GM12878 (cell line): ENCODE measurements at regions of chr2 and their contacts with region 1.

Region 1: DNA sequence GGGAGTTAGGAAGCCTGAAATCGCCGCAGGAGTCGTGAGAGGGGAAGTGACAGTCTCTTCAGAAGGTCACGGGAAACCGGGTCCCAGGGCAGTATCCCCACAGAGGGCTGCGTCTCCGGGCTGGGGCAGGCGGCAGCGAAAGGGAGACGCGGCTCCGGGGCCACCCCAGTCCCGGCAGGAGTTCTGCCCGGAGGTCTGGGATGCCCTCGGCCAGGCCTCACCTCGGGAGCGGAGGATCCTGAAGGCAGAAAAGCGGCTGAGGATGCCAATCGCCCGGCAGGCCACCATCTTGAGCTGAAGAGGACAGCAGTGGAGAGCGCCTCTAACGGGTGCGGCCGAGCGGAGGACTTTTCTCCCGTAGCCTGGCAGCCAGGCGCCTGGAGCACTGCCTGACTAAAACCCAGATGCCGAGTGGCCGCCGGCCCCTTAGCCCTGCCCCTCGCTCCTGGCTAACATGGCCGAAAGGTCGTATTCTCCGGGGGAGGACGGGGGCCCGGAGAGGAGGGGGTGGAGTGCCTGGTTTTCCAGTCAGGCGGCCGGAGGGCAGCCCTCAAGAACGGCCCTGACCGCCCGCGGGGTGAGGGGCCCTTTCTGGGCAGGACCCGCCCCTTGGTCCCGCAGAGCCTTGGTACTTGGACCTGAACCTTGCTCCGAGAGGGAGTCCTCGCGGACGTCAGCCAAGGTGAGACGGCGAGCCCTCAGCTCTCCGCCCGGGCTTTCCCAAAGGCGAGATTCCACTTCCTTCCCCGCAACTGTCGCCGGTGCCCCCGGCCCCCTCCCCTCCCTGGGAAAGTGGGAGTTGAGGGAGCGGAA is at the starts of genes HADHA and HADHB:
- DNase-seq: peak; percentile 56
- ATAC-seq: peak; percentile 82
- H3K4me3 ChIP-seq: peak within 1 kb of the TSS; percentile 92
- H3K27ac ChIP-seq: peak within 1 kb of the TSS; percentile 96
- H3K4me1 ChIP-seq: peaks cover 16% of the 10 kb centered on the region
- H3K27me3 ChIP-seq: no peaks in the 10 kb centered on the region
- CTCF ChIP-seq: peak; percentile 20 to 36 (median 23); a peak in 4 of 6 replicates
- EP300 ChIP-seq: no peak
- POLR2A ChIP-seq: peak; percentile 89
- RAD21 ChIP-seq: no peak
- polyA plus RNA-seq, gene HADHA: 109 to 144 TPM
- polyA plus RNA-seq, gene HADHB: 107 to 145 TPM

Region 2: DNA sequence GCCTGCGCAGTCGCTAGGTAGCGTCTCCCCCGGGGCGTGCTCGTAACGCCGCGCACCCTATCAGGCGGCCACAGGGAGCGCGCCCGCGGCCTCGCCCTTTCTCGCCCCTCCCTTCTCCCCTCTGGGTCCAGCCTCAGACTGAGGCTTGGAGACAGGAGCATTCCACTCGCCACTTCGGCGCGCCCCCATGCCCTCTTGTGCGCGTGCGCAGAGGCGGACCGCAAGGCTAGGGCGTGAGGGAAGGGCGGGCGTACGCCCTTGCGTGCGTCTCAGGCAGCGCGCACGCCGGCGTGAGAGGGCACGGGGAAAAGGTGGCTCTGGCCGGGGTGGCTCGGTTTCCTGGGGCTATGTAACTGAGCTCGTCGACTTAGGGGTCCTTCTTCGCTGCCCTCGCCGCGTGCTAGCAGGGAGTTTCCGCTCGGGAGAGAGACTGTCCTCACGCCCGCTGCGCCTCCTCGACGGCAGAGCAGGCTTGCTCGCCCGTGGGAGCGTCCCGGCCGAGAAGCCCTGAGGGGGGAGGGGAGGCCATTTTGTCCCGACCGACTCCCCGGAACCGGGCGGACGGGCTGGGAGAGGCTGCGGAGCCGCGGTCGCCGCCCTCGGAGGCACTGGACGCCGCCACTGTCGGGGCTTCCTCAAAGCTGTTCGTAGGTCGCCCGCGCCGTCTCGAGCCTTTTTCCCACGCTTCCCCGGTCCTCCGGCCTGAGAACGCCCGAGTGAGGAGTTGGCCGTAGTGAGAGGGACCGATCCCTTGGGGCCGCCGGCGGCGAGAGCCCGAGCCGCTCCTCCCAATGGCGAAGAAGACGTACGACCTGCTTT is 210.5 kb before region 1 on chr2 and contains the start of gene RAB10:
- CTCF ChIA-PET with region 1: no interaction called
- POLR2A ChIA-PET with region 1: interaction called, 11 read pairs
- RAD21 ChIA-PET with region 1: no interaction called
- SMC1A ChIA-PET with region 1: no interaction called
- in situ Hi-C with region 1: no loop called
- intact Hi-C with region 1: no loop called
- DNase-seq: peak; percentile 98
- ATAC-seq: peak; percentile 89
- H3K4me3 ChIP-seq: peak within 1 kb of the TSS; percentile 98
- H3K27ac ChIP-seq: peak within 1 kb of the TSS; percentile 95
- H3K4me1 ChIP-seq: peaks cover 3% of the 10 kb centered on the region; the same call in 1 of the 2 replicates
- H3K27me3 ChIP-seq: no peaks in the 10 kb centered on the region
- CTCF ChIP-seq: no peak
- EP300 ChIP-seq: no peak
- POLR2A ChIP-seq: peak; percentile 98
- RAD21 ChIP-seq: no peak
- polyA plus RNA-seq, gene RAB10: 13.3 to 24.8 TPM

Region 3: GRCh38 chr2:26255759-26256384 is 11.4 kb after region 1 on chr2:
- CTCF ChIA-PET with region 1: interaction called, 3 read pairs
- POLR2A ChIA-PET with region 1: interaction called, 11 read pairs
- RAD21 ChIA-PET with region 1: no interaction called
- SMC1A ChIA-PET with region 1: interaction called, 11 read pairs
- in situ Hi-C with region 1: no loop called
- intact Hi-C with region 1: no loop called
- DNase-seq: no peak
- ATAC-seq: no peak
- H3K4me3 ChIP-seq: no peak overlapping the region
- H3K27ac ChIP-seq: no peak overlapping the region
- H3K4me1 ChIP-seq: no peaks in the 10 kb centered on the region
- H3K27me3 ChIP-seq: no peaks in the 10 kb centered on the region
- CTCF ChIP-seq: no peak
- EP300 ChIP-seq: no peak
- POLR2A ChIP-seq: no peak
- RAD21 ChIP-seq: no peak

Region 4: GRCh38 chr2:26274058-26274613 is 29.6 kb after region 1 on chr2:
- CTCF ChIA-PET with region 1: interaction called, 12 read pairs
- POLR2A ChIA-PET with region 1: interaction called, 10 read pairs
- RAD21 ChIA-PET with region 1: interaction called, 41 read pairs
- SMC1A ChIA-PET with region 1: interaction called, 71 read pairs
- in situ Hi-C with region 1: no loop called
- intact Hi-C with region 1: no loop called
- DNase-seq: no peak
- ATAC-seq: no peak
- H3K4me3 ChIP-seq: no peak overlapping the region
- H3K27ac ChIP-seq: no peak overlapping the region
- H3K4me1 ChIP-seq: peaks cover 6% of the 10 kb centered on the region
- H3K27me3 ChIP-seq: no peaks in the 10 kb centered on the region
- CTCF ChIP-seq: no peak
- EP300 ChIP-seq: no peak
- POLR2A ChIP-seq: no peak
- RAD21 ChIP-seq: no peak

Region 5: DNA sequence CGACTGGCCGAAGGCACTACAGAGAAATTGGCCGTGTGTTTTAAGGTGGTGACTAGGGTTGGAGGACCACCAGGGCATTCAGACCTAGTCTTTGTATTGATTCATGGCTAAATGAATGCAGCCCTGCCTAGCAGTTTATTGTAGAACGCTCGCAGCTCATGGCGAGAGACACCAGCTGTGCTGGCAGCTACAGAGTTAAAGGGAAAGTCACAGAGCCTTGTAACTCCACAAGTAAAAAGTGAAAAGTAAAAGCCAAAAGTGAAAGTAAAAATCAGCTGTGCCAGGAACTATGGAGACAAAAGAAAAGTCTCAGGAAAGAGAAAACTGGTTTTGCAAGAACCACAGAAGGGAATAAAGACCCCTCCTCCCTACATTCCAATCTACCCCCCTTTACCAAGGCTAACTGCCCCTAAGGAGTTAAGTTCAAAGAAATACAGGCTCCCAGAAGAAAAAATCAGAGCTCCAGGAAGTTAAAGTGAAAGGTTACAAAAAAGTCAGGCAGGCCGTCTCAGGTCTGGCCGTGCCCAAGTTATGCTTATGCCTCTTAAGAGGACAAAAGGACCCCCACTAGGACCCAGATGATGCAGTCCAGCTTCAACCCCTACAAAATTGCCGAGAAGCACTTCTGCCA is 55.1 kb after region 1 on chr2:
- CTCF ChIA-PET with region 1: interaction called, 6 read pairs
- POLR2A ChIA-PET with region 1: interaction called, 24 read pairs
- RAD21 ChIA-PET with region 1: interaction called, 11 read pairs
- SMC1A ChIA-PET with region 1: interaction called, 10 read pairs
- in situ Hi-C with region 1: no loop called
- intact Hi-C with region 1: no loop called
- DNase-seq: peak; percentile 12
- ATAC-seq: peak; percentile 73
- H3K4me3 ChIP-seq: peak overlapping the region; percentile 57
- H3K27ac ChIP-seq: peak overlapping the region; percentile 38
- H3K4me1 ChIP-seq: peaks cover 4% of the 10 kb centered on the region; the same call in 1 of the 2 replicates
- H3K27me3 ChIP-seq: no peaks in the 10 kb centered on the region
- CTCF ChIP-seq: no peak
- EP300 ChIP-seq: no peak
- POLR2A ChIP-seq: no peak
- RAD21 ChIP-seq: no peak

Region 6: DNA sequence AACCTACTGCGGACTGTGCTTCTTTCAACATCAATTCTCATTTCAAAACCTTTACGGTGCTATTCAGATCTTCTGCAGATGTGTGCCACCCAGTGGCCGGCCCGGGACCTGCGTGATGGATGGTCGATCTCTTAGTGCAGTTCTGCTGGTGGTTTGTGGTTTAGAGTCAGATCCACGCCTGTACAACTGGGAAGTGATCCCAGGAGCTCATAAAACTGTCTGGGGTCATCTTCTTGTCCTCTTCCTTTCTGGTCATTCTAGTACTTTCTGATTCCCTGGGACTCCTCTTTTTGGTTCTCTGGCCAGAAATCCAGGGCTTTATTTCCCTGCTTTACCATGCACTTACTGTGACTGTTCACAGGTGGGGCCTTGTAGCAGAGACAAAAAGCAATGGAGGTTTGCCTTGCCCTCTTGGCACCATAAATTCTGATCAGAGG is 85.6 kb after region 1 on chr2:
- CTCF ChIA-PET with region 1: interaction called, 4 read pairs
- POLR2A ChIA-PET with region 1: no interaction called
- RAD21 ChIA-PET with region 1: interaction called, 4 read pairs
- SMC1A ChIA-PET with region 1: interaction called, 6 read pairs
- in situ Hi-C with region 1: no loop called
- intact Hi-C with region 1: loop called (anchors 2 kb)
- DNase-seq: peak; percentile 31
- ATAC-seq: peak; percentile 99
- H3K4me3 ChIP-seq: no peak overlapping the region
- H3K27ac ChIP-seq: no peak overlapping the region
- H3K4me1 ChIP-seq: no peaks in the 10 kb centered on the region
- H3K27me3 ChIP-seq: no peaks in the 10 kb centered on the region
- CTCF ChIP-seq: peak; percentile 91 to 96 (median 92)
- EP300 ChIP-seq: no peak
- POLR2A ChIP-seq: no peak
- RAD21 ChIP-seq: peak; percentile 92

Region 7: DNA sequence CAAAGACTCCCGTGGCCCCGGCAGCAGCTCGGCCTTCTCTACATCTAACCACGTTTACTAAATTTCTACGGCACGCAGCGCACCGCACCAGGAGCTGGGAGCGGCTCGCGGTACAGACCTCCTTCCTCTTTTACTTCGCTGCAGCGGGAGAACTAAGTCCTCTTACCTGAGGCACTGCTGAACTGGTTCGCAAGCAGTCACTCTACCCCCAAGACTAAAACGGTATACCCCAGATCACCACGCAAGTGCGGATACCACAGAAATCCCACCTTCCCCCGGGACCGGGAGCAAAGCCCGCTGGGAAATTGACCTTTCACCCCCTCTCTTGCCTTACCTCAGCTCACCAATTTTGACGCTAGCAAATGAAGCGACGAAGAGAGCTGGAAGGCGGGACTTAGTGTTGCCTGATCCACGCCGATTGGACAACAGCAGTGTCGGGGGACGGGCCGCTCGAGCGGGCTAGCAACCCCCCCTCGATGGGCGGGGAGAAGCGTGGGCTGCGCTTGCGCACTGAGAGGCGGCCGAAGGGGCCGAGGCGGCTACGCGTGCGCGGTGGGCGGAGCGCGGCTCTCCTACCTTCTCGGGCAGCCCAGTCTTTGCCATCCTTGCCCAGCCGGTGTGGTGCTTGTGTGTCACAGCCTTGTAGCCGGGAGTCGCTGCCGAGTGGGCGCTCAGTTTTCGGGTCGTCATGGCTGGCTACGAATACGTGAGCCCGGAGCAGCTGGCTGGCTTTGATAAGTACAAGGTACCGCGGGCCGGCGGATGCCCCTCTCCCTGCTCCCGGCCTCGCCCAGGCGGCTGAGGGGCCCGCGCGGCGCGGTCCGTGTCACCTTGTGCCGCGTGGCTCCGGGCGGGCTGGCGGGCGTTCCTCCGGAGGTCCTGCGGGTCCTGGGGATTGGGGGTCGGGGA is 101.3 kb after region 1 on chr2 and contains the start of gene SELENOI:
- CTCF ChIA-PET with region 1: interaction called, 5 read pairs
- POLR2A ChIA-PET with region 1: interaction called, 35 read pairs
- RAD21 ChIA-PET with region 1: interaction called, 12 read pairs
- SMC1A ChIA-PET with region 1: interaction called, 5 read pairs
- in situ Hi-C with region 1: no loop called
- intact Hi-C with region 1: loop called (anchors 1 kb)
- DNase-seq: peak; percentile 99
- ATAC-seq: peak; percentile 95
- H3K4me3 ChIP-seq: peak within 1 kb of the TSS; percentile 97
- H3K27ac ChIP-seq: peak within 1 kb of the TSS; percentile 89
- H3K4me1 ChIP-seq: peaks cover 12% of the 10 kb centered on the region
- H3K27me3 ChIP-seq: no peaks in the 10 kb centered on the region
- CTCF ChIP-seq: no peak
- EP300 ChIP-seq: peak in 1 of 2 experiments; percentile 43; a peak in 1 of 4 replicates
- POLR2A ChIP-seq: peak; percentile 93
- RAD21 ChIP-seq: no peak
- polyA plus RNA-seq, gene SELENOI: 5.2 to 6.3 TPM

Region 8: DNA sequence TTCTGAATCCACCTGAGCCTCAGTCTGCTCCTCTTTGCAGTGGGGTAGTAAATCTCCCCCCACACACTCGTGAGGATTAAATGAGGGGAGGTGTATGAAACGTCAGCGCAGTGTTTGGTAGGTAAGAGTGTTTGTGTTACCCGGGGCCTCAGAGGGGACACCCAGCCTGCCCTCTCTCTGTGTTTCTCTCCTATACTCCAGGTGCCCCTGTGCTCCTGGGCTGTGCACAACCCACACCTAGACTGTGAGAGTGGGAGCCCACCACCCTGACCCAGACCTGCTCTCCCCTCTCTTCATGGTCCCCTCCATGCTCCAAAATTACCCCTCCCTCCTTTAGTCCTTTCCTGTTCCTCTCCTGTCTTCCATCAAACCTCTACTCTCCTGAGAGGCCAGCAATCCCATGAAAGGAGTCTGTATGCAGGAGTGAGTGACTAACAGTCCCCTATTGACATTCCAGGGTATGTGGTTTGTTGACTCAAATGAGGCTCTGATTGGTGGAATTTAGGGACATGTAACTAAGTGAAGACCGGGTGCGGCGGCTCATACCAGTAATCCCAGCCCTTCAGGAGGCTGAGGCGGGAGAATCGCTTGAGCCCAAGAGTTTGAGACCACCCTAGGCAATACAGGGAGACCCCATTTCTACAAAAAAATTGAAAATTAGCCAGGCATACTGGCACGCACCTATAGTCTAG is 386.3 kb after region 1 on chr2:
- CTCF ChIA-PET with region 1: no interaction called
- POLR2A ChIA-PET with region 1: no interaction called
- RAD21 ChIA-PET with region 1: no interaction called
- SMC1A ChIA-PET with region 1: no interaction called
- in situ Hi-C with region 1: no loop called
- intact Hi-C with region 1: no loop called
- DNase-seq: no peak
- ATAC-seq: no peak
- H3K4me3 ChIP-seq: no peak overlapping the region
- H3K27ac ChIP-seq: no peak overlapping the region
- H3K4me1 ChIP-seq: no peaks in the 10 kb centered on the region
- H3K27me3 ChIP-seq: peaks cover 2 to 5% of the 10 kb centered on the region in 2 experiments; a peak in 2 of 4 replicates
- CTCF ChIP-seq: no peak
- EP300 ChIP-seq: no peak
- POLR2A ChIP-seq: no peak
- RAD21 ChIP-seq: no peak